ENCODE measurements at regions of chr7 and their contacts with region 1.

Region 1: DNA sequence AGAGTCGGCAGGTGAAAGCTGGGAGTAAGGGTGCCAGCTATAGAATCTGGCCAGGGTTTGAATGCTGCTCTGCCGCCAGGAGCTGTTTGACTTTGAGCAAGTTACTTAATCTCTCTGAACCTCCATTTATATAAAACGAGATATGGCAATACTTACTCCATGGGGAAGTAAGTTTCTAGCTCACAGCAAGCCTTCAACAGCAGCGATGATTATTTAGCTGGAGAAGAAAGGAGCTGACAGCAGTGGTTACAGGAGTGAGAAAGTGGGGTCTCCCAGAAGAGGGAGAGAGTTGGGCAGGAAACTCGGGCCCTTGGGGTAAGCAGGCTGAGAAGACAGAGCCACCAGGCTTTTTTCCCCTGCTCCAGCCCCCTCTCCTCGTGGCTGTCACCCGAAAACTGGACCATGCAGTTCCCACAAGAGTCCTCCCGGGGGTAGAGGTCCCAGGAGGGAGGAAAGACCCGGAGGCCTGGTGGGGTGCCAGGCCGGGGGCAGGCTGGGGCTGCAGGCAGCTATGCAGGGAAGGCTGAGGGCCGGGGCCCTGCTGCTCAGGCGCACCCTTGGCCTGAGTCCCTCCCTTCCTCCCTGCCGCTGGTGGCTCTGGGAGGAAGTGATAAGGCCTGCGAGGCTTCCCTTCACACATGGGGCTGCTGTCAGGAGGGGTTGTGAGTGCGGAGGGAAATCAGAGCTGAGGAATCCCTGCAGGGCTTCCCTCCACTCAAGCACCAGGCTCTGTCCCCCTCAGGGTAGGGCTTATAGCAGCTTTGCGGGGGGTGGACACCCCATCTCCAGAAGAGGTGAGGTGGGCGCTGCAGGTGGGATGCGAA is 3.5 kb downstream of the NOS3 start:
- DNase-seq: no peak
- ATAC-seq: peak; percentile 66
- H3K4me3 Mint-ChIP-seq: peak overlapping the region; percentile 15
- H3K27ac Mint-ChIP-seq: no peak overlapping the region
- H3K4me1 Mint-ChIP-seq: peaks cover 35% of the 10 kb centered on the region
- H3K27me3 Mint-ChIP-seq: no peaks in the 10 kb centered on the region
- CTCF ChIP-seq: no peak

Region 2: DNA sequence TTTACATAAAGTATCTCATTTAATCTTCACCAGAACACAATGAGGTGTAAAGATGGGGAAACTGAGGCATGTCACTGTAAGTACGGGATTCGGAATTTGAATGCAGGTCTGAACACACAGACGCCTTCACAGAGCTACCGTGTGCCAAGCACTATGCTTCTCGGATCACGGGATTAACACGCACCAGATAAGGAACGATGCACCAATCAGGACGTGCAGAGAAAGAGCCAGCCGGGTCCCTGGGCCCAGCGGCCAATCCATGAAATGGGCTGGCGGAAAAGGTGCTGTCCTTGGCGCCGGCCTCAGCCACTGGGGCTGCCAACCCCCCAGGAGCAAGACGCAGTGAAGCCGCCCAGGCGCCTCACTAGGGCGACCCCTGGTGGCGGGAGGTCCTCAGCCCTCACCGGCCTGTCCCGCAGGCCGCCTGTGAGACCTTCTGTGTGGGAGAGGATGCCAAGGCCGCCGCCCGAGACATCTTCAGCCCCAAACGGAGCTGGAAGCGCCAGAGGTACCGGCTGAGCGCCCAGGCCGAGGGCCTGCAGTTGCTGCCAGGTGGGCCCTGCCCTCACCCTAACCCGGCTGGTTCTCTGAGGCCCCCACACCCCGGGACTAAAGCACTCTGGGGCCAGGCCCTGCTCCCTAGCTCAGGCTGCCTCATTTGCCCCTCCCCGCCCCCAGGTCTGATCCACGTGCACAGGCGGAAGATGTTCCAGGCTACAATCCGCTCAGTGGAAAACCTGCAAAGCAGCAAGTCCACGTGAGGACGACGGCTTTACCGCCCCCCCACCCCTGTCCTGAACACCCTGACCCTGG is 14.4 kb after region 1 on chr7:
- CTCF ChIA-PET with region 1: interaction called, 31 read pairs
- POLR2A ChIA-PET with region 1: interaction called, 7 read pairs
- intact Hi-C with region 1: no loop called
- DNase-seq: peak; percentile 83
- ATAC-seq: peak; percentile 53
- H3K4me3 Mint-ChIP-seq: peak overlapping the region; percentile 77
- H3K27ac Mint-ChIP-seq: peak overlapping the region; percentile 86
- H3K4me1 Mint-ChIP-seq: peaks cover 49% of the 10 kb centered on the region
- H3K27me3 Mint-ChIP-seq: no peaks in the 10 kb centered on the region
- CTCF ChIP-seq: peak; percentile 83

Region 3: GRCh38 chr7:151017953-151018420 is 23.6 kb after region 1 on chr7:
- CTCF ChIA-PET with region 1: interaction called, 11 read pairs
- POLR2A ChIA-PET with region 1: interaction called, 3 read pairs
- intact Hi-C with region 1: no loop called
- DNase-seq: peak; percentile 89
- ATAC-seq: peak; percentile 71
- H3K4me3 Mint-ChIP-seq: peak overlapping the region; percentile 79
- H3K27ac Mint-ChIP-seq: peak overlapping the region; percentile 75
- H3K4me1 Mint-ChIP-seq: peaks cover 52% of the 10 kb centered on the region
- H3K27me3 Mint-ChIP-seq: peaks cover 10% of the 10 kb centered on the region
- CTCF ChIP-seq: peak; percentile 99

Measured in activated CD8-positive, alpha-beta T cell treated with anti-CD3 and anti-CD28 coated beads for 36 hours (primary cell).